Activated naive CD4-positive, alpha-beta T cell treated with anti-CD3 and anti-CD28 coated beads for 36 hours (primary cell): ENCODE measurements at regions of chr11 and their contacts with region 1.

Region 1: GRCh38 chr11:35785287-35786167 is 123.0 kb downstream of the TRIM44 start:
- DNase-seq: peak; percentile 10
- H3K4me3 Mint-ChIP-seq: no peak overlapping the region
- H3K27ac Mint-ChIP-seq: no peak overlapping the region
- H3K4me1 Mint-ChIP-seq: peaks cover 48% of the 10 kb centered on the region
- H3K27me3 Mint-ChIP-seq: no peaks in the 10 kb centered on the region

Region 2: GRCh38 chr11:35740061-35740799 is 45.3 kb before region 1 on chr11:
- CTCF ChIA-PET with region 1: no interaction called
- intact Hi-C with region 1: loop called (anchors 5 kb)
- DNase-seq: peak; percentile 15
- H3K4me3 Mint-ChIP-seq: no peak overlapping the region
- H3K27ac Mint-ChIP-seq: no peak overlapping the region
- H3K4me1 Mint-ChIP-seq: peaks cover 25% of the 10 kb centered on the region
- H3K27me3 Mint-ChIP-seq: no peaks in the 10 kb centered on the region

Region 3: GRCh38 chr11:35800970-35801953 is 15.7 kb after region 1 on chr11:
- CTCF ChIA-PET with region 1: no interaction called
- intact Hi-C with region 1: no loop called
- DNase-seq: no peak
- H3K4me3 Mint-ChIP-seq: no peak overlapping the region
- H3K27ac Mint-ChIP-seq: no peak overlapping the region
- H3K4me1 Mint-ChIP-seq: peaks cover 4% of the 10 kb centered on the region
- H3K27me3 Mint-ChIP-seq: no peaks in the 10 kb centered on the region